ENCODE measurements at regions of chr4 and their contacts with region 1.

Region 1: GRCh38 chr4:99949034-99949998 is 759 bp downstream of the H2AZ1 start:
- DNase-seq: peak; percentile 67 to 95 (median 88)
- ATAC-seq: peak; percentile 32
- H3K4me3 ChIP-seq: peak overlapping the region; percentile 89 to 97
- H3K4me3 Mint-ChIP-seq: no peak overlapping the region
- H3K27ac ChIP-seq: peak overlapping the region; percentile 85 to 97
- H3K27ac Mint-ChIP-seq: no peak overlapping the region
- H3K4me1 ChIP-seq: peaks cover 37% of the 10 kb centered on the region
- H3K4me1 Mint-ChIP-seq: peaks cover 35% of the 10 kb centered on the region
- H3K27me3 ChIP-seq: no peaks in the 10 kb centered on the region
- H3K27me3 Mint-ChIP-seq: no peaks in the 10 kb centered on the region
- CTCF ChIP-seq: peak; percentile 58

Region 2: GRCh38 chr4:98143001-98143899 is 1806.1 kb before region 1 on chr4 and contains the start of gene STPG2:
- CTCF ChIA-PET with region 1: no interaction called
- POLR2A ChIA-PET with region 1: no interaction called
- intact Hi-C with region 1: loop called (anchors 1 to 2 kb)
- DNase-seq: peak; percentile 87 to 96 (median 93)
- ATAC-seq: peak; percentile 99
- H3K4me3 ChIP-seq: peak within 1 kb of the TSS; percentile 69 to 70
- H3K4me3 Mint-ChIP-seq: peak within 1 kb of the TSS; percentile 94
- H3K27ac ChIP-seq: peak within 1 kb of the TSS; percentile 68 to 90
- H3K27ac Mint-ChIP-seq: peak within 1 kb of the TSS; percentile 96
- H3K4me1 ChIP-seq: peaks cover 7% of the 10 kb centered on the region
- H3K4me1 Mint-ChIP-seq: peaks cover 17% of the 10 kb centered on the region
- H3K27me3 ChIP-seq: peaks cover 0 to 2% of the 10 kb centered on the region in 2 experiments
- H3K27me3 Mint-ChIP-seq: no peaks in the 10 kb centered on the region
- CTCF ChIP-seq: peak; percentile 64
- total RNA-seq, gene STPG2: not detected

Region 3: GRCh38 chr4:99088481-99089365 is 860.6 kb before region 1 on chr4 and contains the start of gene ADH5:
- CTCF ChIA-PET with region 1: no interaction called
- POLR2A ChIA-PET with region 1: interaction called, 7 read pairs
- intact Hi-C with region 1: loop called (anchors 1 to 5 kb)
- DNase-seq: peak; percentile 88 to 94 (median 93)
- ATAC-seq: peak; percentile 96
- H3K4me3 ChIP-seq: peak within 1 kb of the TSS; percentile 59 to 91
- H3K4me3 Mint-ChIP-seq: peak within 1 kb of the TSS; percentile 99
- H3K27ac ChIP-seq: peak within 1 kb of the TSS; percentile 76 to 86
- H3K27ac Mint-ChIP-seq: peak within 1 kb of the TSS; percentile 99
- H3K4me1 ChIP-seq: peaks cover 23% of the 10 kb centered on the region
- H3K4me1 Mint-ChIP-seq: peaks cover 58% of the 10 kb centered on the region
- H3K27me3 ChIP-seq: no peaks in the 10 kb centered on the region
- H3K27me3 Mint-ChIP-seq: no peaks in the 10 kb centered on the region
- CTCF ChIP-seq: no peak
- total RNA-seq, gene ADH5: 50.0 to 51.7 TPM

Region 4: GRCh38 chr4:99722662-99723200 is 226.6 kb before region 1 on chr4:
- CTCF ChIA-PET with region 1: no interaction called
- POLR2A ChIA-PET with region 1: no interaction called
- intact Hi-C with region 1: no loop called
- DNase-seq: no peak
- ATAC-seq: no peak
- H3K4me3 ChIP-seq: no peak overlapping the region
- H3K4me3 Mint-ChIP-seq: no peak overlapping the region
- H3K27ac ChIP-seq: no peak overlapping the region
- H3K27ac Mint-ChIP-seq: no peak overlapping the region
- H3K4me1 ChIP-seq: no peaks in the 10 kb centered on the region
- H3K4me1 Mint-ChIP-seq: no peaks in the 10 kb centered on the region
- H3K27me3 ChIP-seq: no peaks in the 10 kb centered on the region
- H3K27me3 Mint-ChIP-seq: peaks cover 9% of the 10 kb centered on the region
- CTCF ChIP-seq: no peak

Region 5: GRCh38 chr4:99816545-99817308 is 132.6 kb before region 1 on chr4 and contains the start of gene DAPP1:
- CTCF ChIA-PET with region 1: interaction called, 50 read pairs
- POLR2A ChIA-PET with region 1: interaction called, 9 read pairs
- intact Hi-C with region 1: loop called (anchors 2 kb)
- DNase-seq: peak; percentile 48 to 91 (median 70)
- ATAC-seq: peak; percentile 97
- H3K4me3 ChIP-seq: peak within 1 kb of the TSS; percentile 36 to 49
- H3K4me3 Mint-ChIP-seq: peak within 1 kb of the TSS; percentile 85
- H3K27ac ChIP-seq: peak within 1 kb of the TSS; percentile 22 to 53
- H3K27ac Mint-ChIP-seq: peak within 1 kb of the TSS; percentile 89
- H3K4me1 ChIP-seq: peaks cover 38% of the 10 kb centered on the region
- H3K4me1 Mint-ChIP-seq: peaks cover 56% of the 10 kb centered on the region
- H3K27me3 ChIP-seq: no peaks in the 10 kb centered on the region
- H3K27me3 Mint-ChIP-seq: no peaks in the 10 kb centered on the region
- CTCF ChIP-seq: no peak
- total RNA-seq, gene DAPP1: 3.2 to 3.6 TPM

Region 6: DNA sequence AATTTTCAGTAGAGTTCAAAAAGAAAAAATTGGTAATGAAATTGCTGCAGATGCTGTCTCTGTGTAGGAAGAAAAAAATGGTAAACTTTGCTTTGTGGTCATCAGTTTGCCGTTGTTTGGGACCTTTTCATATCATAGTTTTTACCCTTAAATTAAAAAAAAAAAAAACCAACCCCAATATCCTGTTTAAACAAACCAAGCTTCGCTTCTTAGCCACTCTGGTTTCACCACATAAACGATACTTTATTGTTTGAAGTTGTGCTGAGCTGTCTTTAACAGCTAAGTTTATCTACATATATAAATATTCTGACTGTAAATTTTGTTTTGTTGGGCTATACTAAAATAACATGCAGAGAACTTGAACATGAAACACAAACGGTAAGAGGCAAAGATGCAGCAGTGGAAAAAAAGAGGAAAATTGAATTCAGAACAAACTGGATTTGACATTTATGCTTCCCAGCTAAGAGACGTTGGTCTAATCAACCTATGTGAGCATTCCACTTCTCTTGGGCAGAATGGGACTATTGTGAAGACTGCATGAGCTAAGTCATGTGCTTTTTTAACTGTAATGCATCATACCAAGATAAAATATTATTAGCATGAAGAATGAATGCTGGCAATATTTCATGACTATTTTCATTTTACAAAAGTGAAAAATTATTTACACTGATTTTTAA is 16.5 kb after region 1 on chr4:
- CTCF ChIA-PET with region 1: no interaction called
- POLR2A ChIA-PET with region 1: interaction called, 15 read pairs
- intact Hi-C with region 1: loop called in 1 of 2 experiments (anchors 1 kb)
- DNase-seq: peak in 2 of 9 experiments; percentile 37 to 65
- ATAC-seq: peak; percentile 85
- H3K4me3 ChIP-seq: no peak overlapping the region
- H3K4me3 Mint-ChIP-seq: no peak overlapping the region
- H3K27ac ChIP-seq: peak overlapping the region in 1 of 2 experiments; percentile 4
- H3K27ac Mint-ChIP-seq: no peak overlapping the region
- H3K4me1 ChIP-seq: peaks cover 10% of the 10 kb centered on the region
- H3K4me1 Mint-ChIP-seq: peaks cover 24% of the 10 kb centered on the region
- H3K27me3 ChIP-seq: no peaks in the 10 kb centered on the region
- H3K27me3 Mint-ChIP-seq: no peaks in the 10 kb centered on the region
- CTCF ChIP-seq: no peak